ENCODE measurements at regions of chr4 and their contacts with region 1.

Region 1: GRCh38 chr4:75724066-75724866 is at the start of gene USO1:
- DNase-seq: peak; percentile 98
- H3K4me3 Mint-ChIP-seq: peak within 1 kb of the TSS; percentile 100
- H3K27ac Mint-ChIP-seq: peak within 1 kb of the TSS; percentile 100
- H3K4me1 Mint-ChIP-seq: peaks cover 32% of the 10 kb centered on the region
- H3K27me3 Mint-ChIP-seq: no peaks in the 10 kb centered on the region
- CTCF ChIP-seq: peak; percentile 59
- total RNA-seq, gene USO1: 105 and 108 TPM in 2 replicates

Region 2: GRCh38 chr4:75514131-75514948 is 209.9 kb before region 1 on chr4 and contains the starts of genes RCHY1 and THAP6:
- CTCF ChIA-PET with region 1: interaction called, 3 read pairs
- POLR2A ChIA-PET with region 1: interaction called, 66 read pairs
- intact Hi-C with region 1: no loop called
- DNase-seq: peak; percentile 98
- H3K4me3 Mint-ChIP-seq: no peak within 1 kb of the TSS
- H3K27ac Mint-ChIP-seq: no peak within 1 kb of the TSS
- H3K4me1 Mint-ChIP-seq: peaks cover 33% of the 10 kb centered on the region
- H3K27me3 Mint-ChIP-seq: no peaks in the 10 kb centered on the region
- CTCF ChIP-seq: no peak
- total RNA-seq, gene RCHY1: 29.1 and 38.3 TPM in 2 replicates
- total RNA-seq, gene THAP6: 27.6 and 30.0 TPM in 2 replicates

Region 3: GRCh38 chr4:75653845-75654503 is 70.3 kb before region 1 on chr4:
- CTCF ChIA-PET with region 1: interaction called, 16 read pairs
- POLR2A ChIA-PET with region 1: interaction called, 24 read pairs
- intact Hi-C with region 1: loop called (anchors 1 kb)
- DNase-seq: peak; percentile 45
- H3K4me3 Mint-ChIP-seq: no peak overlapping the region
- H3K27ac Mint-ChIP-seq: no peak overlapping the region
- H3K4me1 Mint-ChIP-seq: peaks cover 4% of the 10 kb centered on the region
- H3K27me3 Mint-ChIP-seq: no peaks in the 10 kb centered on the region
- CTCF ChIP-seq: peak; percentile 45

Region 4: GRCh38 chr4:75673027-75673958 is 51.0 kb before region 1 on chr4 and contains the start of gene G3BP2:
- CTCF ChIA-PET with region 1: interaction called, 57 read pairs
- POLR2A ChIA-PET with region 1: interaction called, 375 read pairs
- intact Hi-C with region 1: loop called (anchors 1 kb)
- DNase-seq: peak; percentile 97
- H3K4me3 Mint-ChIP-seq: peak within 1 kb of the TSS; percentile 93
- H3K27ac Mint-ChIP-seq: peak within 1 kb of the TSS; percentile 92
- H3K4me1 Mint-ChIP-seq: peaks cover 27% of the 10 kb centered on the region
- H3K27me3 Mint-ChIP-seq: no peaks in the 10 kb centered on the region
- CTCF ChIP-seq: no peak
- total RNA-seq, gene G3BP2: 179 and 231 TPM in 2 replicates

Region 5: DNA sequence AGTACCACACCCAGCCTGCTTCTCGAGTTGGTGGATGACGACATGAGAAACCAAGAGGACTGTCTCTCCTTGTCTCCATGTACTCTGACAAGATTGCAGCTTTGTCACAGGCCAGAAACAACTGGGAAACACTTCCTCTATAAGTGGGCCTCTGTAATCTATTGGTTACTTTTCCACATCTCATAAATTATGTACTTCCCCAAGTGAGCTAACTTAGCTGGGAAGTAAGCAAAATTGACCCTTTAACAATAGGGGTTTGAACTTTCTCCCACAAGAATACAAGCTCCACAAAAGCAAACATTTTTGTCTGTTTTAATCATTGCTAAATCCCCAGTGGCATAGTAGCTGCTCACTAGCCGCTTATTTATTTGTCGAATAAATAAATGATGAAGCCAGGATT is 14.0 kb before region 1 on chr4:
- CTCF ChIA-PET with region 1: interaction called, 16 read pairs
- POLR2A ChIA-PET with region 1: interaction called, 33 read pairs
- intact Hi-C with region 1: no loop called
- DNase-seq: no peak
- H3K4me3 Mint-ChIP-seq: no peak overlapping the region
- H3K27ac Mint-ChIP-seq: no peak overlapping the region
- H3K4me1 Mint-ChIP-seq: no peaks in the 10 kb centered on the region
- H3K27me3 Mint-ChIP-seq: no peaks in the 10 kb centered on the region
- CTCF ChIP-seq: no peak

Region 6: GRCh38 chr4:75745161-75745560 is 20.9 kb after region 1 on chr4:
- CTCF ChIA-PET with region 1: interaction called, 9 read pairs
- POLR2A ChIA-PET with region 1: interaction called, 82 read pairs
- intact Hi-C with region 1: no loop called
- DNase-seq: peak; percentile 78
- H3K4me3 Mint-ChIP-seq: no peak overlapping the region
- H3K27ac Mint-ChIP-seq: peak overlapping the region; percentile 47
- H3K4me1 Mint-ChIP-seq: peaks cover 7% of the 10 kb centered on the region
- H3K27me3 Mint-ChIP-seq: no peaks in the 10 kb centered on the region
- CTCF ChIP-seq: no peak

Region 7: DNA sequence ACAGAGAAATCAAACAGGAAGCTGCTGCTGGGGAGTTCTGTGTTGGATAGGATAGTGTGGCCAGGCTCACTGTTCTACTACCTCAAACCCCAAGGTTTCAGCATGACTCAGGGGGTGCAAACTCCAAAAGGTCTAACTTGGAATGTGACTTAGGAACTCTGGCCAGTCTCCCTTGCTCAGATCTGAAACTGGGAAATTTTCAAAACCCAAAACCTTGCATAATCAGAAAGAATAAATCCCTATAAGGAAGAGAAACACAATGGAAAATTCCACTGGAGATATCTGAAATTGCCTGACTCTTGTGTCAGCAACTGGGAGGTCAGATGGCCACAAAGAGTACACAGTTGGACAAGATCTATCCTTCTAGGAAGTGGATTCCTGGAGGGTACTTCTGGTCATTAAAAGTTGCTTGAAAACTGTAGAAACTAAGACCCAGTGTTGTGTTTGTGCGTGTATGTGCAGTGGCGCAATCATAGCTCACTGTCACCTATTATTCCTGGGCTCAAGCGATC is 119.9 kb after region 1 on chr4:
- CTCF ChIA-PET with region 1: interaction called, 7 read pairs
- POLR2A ChIA-PET with region 1: interaction called, 12 read pairs
- intact Hi-C with region 1: loop called (anchors 1 kb)
- DNase-seq: peak; percentile 66
- H3K4me3 Mint-ChIP-seq: no peak overlapping the region
- H3K27ac Mint-ChIP-seq: no peak overlapping the region
- H3K4me1 Mint-ChIP-seq: peaks cover 5% of the 10 kb centered on the region
- H3K27me3 Mint-ChIP-seq: no peaks in the 10 kb centered on the region
- CTCF ChIP-seq: no peak